ENCODE measurements at regions of chr19 and their contacts with region 1.

Region 1: GRCh38 chr19:56155124-56155687 is 14.1 kb downstream of the ZNF444 start:
- DNase-seq: no peak
- ATAC-seq: peak in 1 of 2 donors; percentile 15
- H3K4me3 ChIP-seq: no peak overlapping the region
- H3K27ac ChIP-seq: no peak overlapping the region
- H3K4me1 ChIP-seq: no peaks in the 10 kb centered on the region
- H3K27me3 ChIP-seq: no peaks in the 10 kb centered on the region

Region 2: GRCh38 chr19:56090931-56091490 is 64.2 kb before region 1 on chr19:
- intact Hi-C with region 1: no loop called
- DNase-seq: peak in 1 of 3 donors; percentile 53
- ATAC-seq: peak; percentile 27 to 42
- H3K4me3 ChIP-seq: no peak overlapping the region
- H3K27ac ChIP-seq: peak overlapping the region; percentile 71
- H3K4me1 ChIP-seq: peaks cover 3% of the 10 kb centered on the region
- H3K27me3 ChIP-seq: no peaks in the 10 kb centered on the region

Region 3: DNA sequence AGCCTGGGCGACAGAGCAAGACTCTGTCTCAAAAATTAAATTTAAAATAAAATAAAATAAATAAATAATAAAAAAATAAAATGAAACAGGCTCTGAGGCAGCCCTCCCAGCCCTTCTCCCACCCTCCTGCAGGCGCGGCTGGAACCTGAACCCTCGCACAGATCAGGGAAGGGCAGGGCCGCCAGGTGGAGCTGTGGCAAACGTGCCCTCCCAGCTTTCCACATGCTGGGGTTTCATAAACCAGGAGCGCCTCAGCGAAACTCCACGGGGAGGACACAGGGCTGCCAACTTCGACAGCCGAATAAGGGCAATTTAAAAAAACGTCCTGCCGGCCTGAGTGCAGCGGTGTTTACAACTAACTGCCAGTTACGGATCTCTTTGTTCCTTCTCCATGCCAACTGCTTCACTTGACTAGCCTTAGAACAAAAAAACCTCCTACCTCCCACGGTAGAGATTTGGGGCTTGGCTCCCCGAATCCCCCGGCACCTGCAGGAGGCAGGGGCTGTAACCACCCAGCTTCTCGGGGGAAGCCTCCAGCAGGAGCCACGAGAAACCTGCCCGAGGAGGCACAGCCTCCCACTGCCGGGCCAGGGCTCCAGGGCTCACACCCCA is 50.0 kb before region 1 on chr19:
- intact Hi-C with region 1: loop called in 1 of 4 experiments (anchors 10 kb)
- DNase-seq: peak; percentile 70 to 89 (median 88)
- ATAC-seq: peak; percentile 62 to 65
- H3K4me3 ChIP-seq: no peak overlapping the region
- H3K27ac ChIP-seq: no peak overlapping the region
- H3K4me1 ChIP-seq: peaks cover 16% of the 10 kb centered on the region
- H3K27me3 ChIP-seq: no peaks in the 10 kb centered on the region

Measured in right cardiac atrium (tissue), 5 donors.